CD4-positive, alpha-beta T cell (primary cell): ENCODE measurements at regions of chr2 and their contacts with region 1.

Region 1: GRCh38 chr2:237035781-237036475 is 49.8 kb upstream of the COPS8 start:
- DNase-seq: no peak
- ATAC-seq: no peak
- H3K4me3 ChIP-seq: no peak overlapping the region
- H3K4me3 Mint-ChIP-seq: no peak overlapping the region
- H3K27ac ChIP-seq: no peak overlapping the region
- H3K27ac Mint-ChIP-seq: no peak overlapping the region
- H3K4me1 ChIP-seq: no peaks in the 10 kb centered on the region
- H3K4me1 Mint-ChIP-seq: no peaks in the 10 kb centered on the region
- H3K27me3 ChIP-seq: no peaks in the 10 kb centered on the region
- H3K27me3 Mint-ChIP-seq: no peaks in the 10 kb centered on the region
- CTCF ChIP-seq: no peak

Region 2: GRCh38 chr2:236592821-236593220 is 443.1 kb before region 1 on chr2:
- CTCF ChIA-PET with region 1: no interaction called
- POLR2A ChIA-PET with region 1: no interaction called
- intact Hi-C with region 1: loop called in 1 of 2 experiments (anchors 10 kb)
- DNase-seq: no peak
- ATAC-seq: no peak
- H3K4me3 ChIP-seq: no peak overlapping the region
- H3K4me3 Mint-ChIP-seq: no peak overlapping the region
- H3K27ac ChIP-seq: no peak overlapping the region
- H3K27ac Mint-ChIP-seq: no peak overlapping the region
- H3K4me1 ChIP-seq: no peaks in the 10 kb centered on the region
- H3K4me1 Mint-ChIP-seq: no peaks in the 10 kb centered on the region
- H3K27me3 ChIP-seq: no peaks in the 10 kb centered on the region
- H3K27me3 Mint-ChIP-seq: no peaks in the 10 kb centered on the region
- CTCF ChIP-seq: no peak